T-cell (primary cell): ENCODE measurements at regions of chr6 and their contacts with region 1.

Region 1: DNA sequence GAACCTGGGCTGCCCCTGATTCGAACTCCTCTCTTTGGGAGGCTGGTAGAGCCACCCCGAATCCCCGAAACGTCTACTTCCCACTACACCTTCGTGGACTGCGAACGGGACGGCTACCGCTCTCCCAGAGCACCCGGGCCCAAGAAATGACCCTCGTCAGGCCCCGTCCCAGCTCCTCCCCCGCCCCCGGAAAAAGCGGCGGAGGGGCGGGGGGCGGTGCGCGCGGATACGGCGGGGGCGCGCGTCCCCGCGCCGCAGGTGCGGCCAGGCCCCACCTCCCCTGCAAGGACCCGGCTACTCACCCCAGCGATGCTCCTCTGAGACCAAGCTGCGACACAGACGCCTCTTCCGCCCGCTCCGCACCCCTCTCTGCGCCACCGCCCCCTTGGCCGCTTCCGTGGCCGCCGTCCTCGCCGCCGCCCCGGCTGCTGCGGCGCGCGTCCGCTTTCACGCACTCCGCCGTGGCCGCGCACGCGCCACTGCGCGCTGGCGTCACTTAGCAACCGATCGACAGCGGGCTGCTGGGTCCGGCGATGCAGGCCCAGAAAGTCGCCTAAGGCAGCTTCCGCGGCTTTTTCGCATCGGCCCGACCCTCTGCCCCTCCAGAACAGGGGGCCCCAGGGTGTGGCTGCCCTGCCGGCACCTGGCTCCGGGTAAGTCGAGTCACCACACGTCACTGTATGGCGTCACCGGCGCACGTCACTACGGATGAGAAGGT is at the start of gene BTBD9:
- DNase-seq: peak; percentile 74 to 94 (median 83)
- ATAC-seq: peak; percentile 84 to 85 (median 84)
- H3K4me3 ChIP-seq: peak within 1 kb of the TSS; percentile 86 to 97
- H3K4me3 Mint-ChIP-seq: peak within 1 kb of the TSS; percentile 83 to 90 (median 89)
- H3K27ac ChIP-seq: peak within 1 kb of the TSS; percentile 90
- H3K27ac Mint-ChIP-seq: peak within 1 kb of the TSS; percentile 80 to 93
- H3K4me1 ChIP-seq: peaks cover 9 to 17% of the 10 kb centered on the region in 2 experiments
- H3K4me1 Mint-ChIP-seq: peaks cover 61 to 67% (median 61%) of the 10 kb centered on the region in 3 donors
- H3K27me3 ChIP-seq: no peaks in the 10 kb centered on the region
- H3K27me3 Mint-ChIP-seq: no peaks in the 10 kb centered on the region
- total RNA-seq, gene BTBD9: 29.3 to 67.7 (median 38.1) TPM

Region 2: DNA sequence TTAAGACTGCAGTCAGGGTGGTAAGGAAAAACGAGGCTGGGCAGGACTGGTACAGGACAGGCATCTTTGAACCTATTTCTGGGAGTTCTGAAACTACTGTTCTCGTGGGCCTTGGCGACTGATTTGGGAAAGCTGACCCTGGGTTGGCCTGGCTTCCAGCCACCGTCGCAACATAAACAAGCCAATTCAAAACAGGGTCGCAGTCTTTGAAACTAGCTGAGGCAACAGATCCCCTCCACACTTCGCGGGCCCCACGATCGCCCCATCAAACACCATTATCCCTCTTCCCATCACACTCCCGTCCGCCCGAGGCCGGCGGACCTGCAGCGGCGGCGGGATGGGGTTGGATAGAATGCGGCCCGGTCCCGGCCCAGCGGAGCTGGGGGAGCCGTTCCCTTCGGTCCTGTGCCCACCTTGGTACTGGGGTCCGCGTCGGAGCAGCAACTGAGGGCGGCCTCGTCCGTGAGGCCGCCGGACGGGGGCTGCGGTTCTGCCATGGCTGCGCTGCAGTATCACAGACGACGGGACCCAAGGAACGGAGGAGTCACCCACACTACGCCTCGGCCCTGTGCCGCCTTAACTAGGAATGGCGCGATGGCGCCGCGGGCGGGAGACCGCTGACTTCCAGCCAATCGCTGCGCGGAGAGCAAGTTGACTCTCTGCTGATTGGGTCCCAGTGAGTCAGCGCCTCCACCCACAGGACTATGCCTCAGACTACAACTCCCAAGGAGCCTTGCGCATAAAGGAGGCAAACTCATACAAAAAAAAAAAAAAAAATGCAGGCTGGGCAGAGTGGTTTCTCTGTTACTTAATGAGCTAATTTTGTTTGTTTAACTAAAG is 63.1 kb after region 1 on chr6 and contains the start of gene GLO1:
- CTCF ChIA-PET with region 1: interaction called in 1 of 2 experiments, 8 read pairs
- POLR2A ChIA-PET with region 1: interaction called, 6 to 11 read pairs
- DNase-seq: peak; percentile 90 to 98 (median 96)
- ATAC-seq: peak; percentile 99 to 100 (median 100)
- H3K4me3 ChIP-seq: peak within 1 kb of the TSS; percentile 80 to 82
- H3K4me3 Mint-ChIP-seq: peak within 1 kb of the TSS; percentile 81 to 97 (median 91)
- H3K27ac ChIP-seq: peak within 1 kb of the TSS; percentile 90
- H3K27ac Mint-ChIP-seq: peak within 1 kb of the TSS; percentile 88 to 98
- H3K4me1 ChIP-seq: peaks cover 0 to 10% of the 10 kb centered on the region in 2 experiments
- H3K4me1 Mint-ChIP-seq: peaks cover 23 to 34% (median 32%) of the 10 kb centered on the region in 3 donors
- H3K27me3 ChIP-seq: no peaks in the 10 kb centered on the region
- H3K27me3 Mint-ChIP-seq: peaks cover 11 to 17% of the 10 kb centered on the region in 2 donors
- total RNA-seq, gene GLO1: 22.0 to 37.1 (median 25.6) TPM